Activated CD4-positive, alpha-beta T cell treated with anti-CD3 and anti-CD28 coated beads for 36 hours (primary cell): ENCODE measurements at regions of chr2 and their contacts with region 1.

Region 1: GRCh38 chr2:198042189-198042588 is 237.8 kb downstream of the PLCL1 start:
- DNase-seq: no peak
- ATAC-seq: no peak
- H3K4me3 Mint-ChIP-seq: no peak overlapping the region
- H3K27ac Mint-ChIP-seq: no peak overlapping the region
- H3K4me1 Mint-ChIP-seq: peaks cover 27% of the 10 kb centered on the region
- H3K27me3 Mint-ChIP-seq: no peaks in the 10 kb centered on the region

Region 2: DNA sequence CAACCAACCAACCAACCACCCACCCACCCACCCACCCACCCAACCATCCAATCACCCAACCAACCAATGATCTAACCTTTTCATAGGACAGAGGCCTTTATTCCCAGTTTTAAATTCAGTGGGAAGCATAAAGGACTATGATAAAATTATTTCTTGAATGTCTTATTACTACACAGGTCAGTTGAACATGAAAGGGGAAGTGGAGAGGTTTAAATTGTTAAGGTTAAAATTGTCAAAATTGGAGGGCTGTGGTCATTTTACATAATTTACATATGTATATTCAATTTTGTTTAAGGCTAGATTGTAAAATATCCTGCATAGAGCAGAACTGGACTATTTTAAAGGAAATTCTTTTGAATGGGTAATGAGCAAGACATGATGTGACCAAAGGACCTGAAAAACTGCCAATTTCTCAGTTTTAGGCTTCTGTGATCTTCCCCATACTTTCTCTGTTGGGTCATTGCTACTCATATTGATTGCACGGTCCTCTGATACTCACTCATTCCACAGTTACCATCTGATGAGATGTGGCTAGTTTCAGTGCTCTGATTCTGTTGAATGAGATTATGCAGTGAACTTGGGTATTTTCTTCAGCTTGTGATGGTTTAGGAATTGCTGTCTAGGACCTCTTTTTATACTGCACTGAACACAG is 110.4 kb before region 1 on chr2:
- CTCF ChIA-PET with region 1: no interaction called
- POLR2A ChIA-PET with region 1: no interaction called
- intact Hi-C with region 1: loop called in 1 of 2 experiments (anchors 5 kb)
- DNase-seq: no peak
- ATAC-seq: peak; percentile 65
- H3K4me3 Mint-ChIP-seq: no peak overlapping the region
- H3K27ac Mint-ChIP-seq: no peak overlapping the region
- H3K4me1 Mint-ChIP-seq: peaks cover 47% of the 10 kb centered on the region
- H3K27me3 Mint-ChIP-seq: no peaks in the 10 kb centered on the region

Region 3: DNA sequence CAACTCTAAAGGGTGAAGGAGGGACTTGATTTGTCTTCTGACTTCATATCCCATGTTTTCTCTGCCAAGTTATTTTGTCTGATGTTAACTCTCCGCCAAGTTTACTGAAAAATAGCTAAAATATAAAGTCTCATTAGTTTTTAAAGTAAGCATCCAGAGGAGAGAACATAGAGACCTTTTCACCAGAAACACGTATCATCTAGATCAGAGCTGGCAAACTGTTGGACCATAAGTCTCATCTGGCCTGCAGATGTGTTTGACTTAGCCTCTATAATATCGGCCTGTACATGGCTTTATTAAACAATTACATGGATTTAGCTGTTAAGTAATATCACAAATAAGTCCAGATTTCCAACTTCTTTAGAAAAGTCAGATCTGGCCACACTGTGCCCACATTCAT is 55.2 kb before region 1 on chr2:
- CTCF ChIA-PET with region 1: no interaction called
- POLR2A ChIA-PET with region 1: no interaction called
- intact Hi-C with region 1: no loop called
- DNase-seq: no peak
- ATAC-seq: no peak
- H3K4me3 Mint-ChIP-seq: no peak overlapping the region
- H3K27ac Mint-ChIP-seq: no peak overlapping the region
- H3K4me1 Mint-ChIP-seq: peaks cover 23% of the 10 kb centered on the region
- H3K27me3 Mint-ChIP-seq: no peaks in the 10 kb centered on the region

Region 4: GRCh38 chr2:198004921-198005829 is 37.0 kb before region 1 on chr2:
- CTCF ChIA-PET with region 1: interaction called, 3 read pairs
- POLR2A ChIA-PET with region 1: no interaction called
- intact Hi-C with region 1: loop called (anchors 2 kb)
- DNase-seq: peak; percentile 71
- ATAC-seq: peak; percentile 67
- H3K4me3 Mint-ChIP-seq: peak overlapping the region; percentile 32
- H3K27ac Mint-ChIP-seq: peak overlapping the region; percentile 88
- H3K4me1 Mint-ChIP-seq: peaks cover 83% of the 10 kb centered on the region
- H3K27me3 Mint-ChIP-seq: no peaks in the 10 kb centered on the region

Region 5: DNA sequence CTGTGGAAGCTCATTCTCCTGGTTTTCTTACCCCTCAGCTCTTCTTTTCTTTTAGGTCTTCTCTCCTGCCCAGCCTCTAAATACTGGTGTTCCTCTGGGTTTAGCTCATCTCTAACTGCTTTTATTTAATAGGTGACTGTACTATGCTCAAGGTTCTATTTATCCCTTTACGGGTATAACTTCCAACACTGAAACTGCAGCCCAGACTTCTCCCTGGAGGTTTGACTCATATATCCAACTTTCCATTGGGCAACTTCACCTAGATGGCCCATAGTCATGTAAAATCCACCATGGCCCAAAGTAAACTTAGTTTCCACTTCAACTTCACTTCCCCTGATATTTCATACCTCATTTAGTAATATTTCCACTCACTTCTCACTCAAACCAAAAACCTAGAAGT is 35.3 kb after region 1 on chr2:
- CTCF ChIA-PET with region 1: no interaction called
- POLR2A ChIA-PET with region 1: no interaction called
- intact Hi-C with region 1: no loop called
- DNase-seq: no peak
- ATAC-seq: no peak
- H3K4me3 Mint-ChIP-seq: no peak overlapping the region
- H3K27ac Mint-ChIP-seq: no peak overlapping the region
- H3K4me1 Mint-ChIP-seq: peaks cover 17% of the 10 kb centered on the region
- H3K27me3 Mint-ChIP-seq: no peaks in the 10 kb centered on the region